Activated naive CD4-positive, alpha-beta T cell treated with anti-CD3 and anti-CD28 coated beads for 36 hours (primary cell): ENCODE measurements at regions of chr14 and their contacts with region 1.

Region 1: GRCh38 chr14:54566410-54567223 is at the start of gene SAMD4A:
- DNase-seq: peak; percentile 75
- H3K4me3 Mint-ChIP-seq: peak within 1 kb of the TSS; percentile 94
- H3K27ac Mint-ChIP-seq: peak within 1 kb of the TSS; percentile 79
- H3K4me1 Mint-ChIP-seq: peaks cover 26% of the 10 kb centered on the region
- H3K27me3 Mint-ChIP-seq: no peaks in the 10 kb centered on the region
- total RNA-seq, gene SAMD4A: 4.7 to 4.9 TPM

Region 2: GRCh38 chr14:54058505-54058904 is 508.1 kb before region 1 on chr14:
- CTCF ChIA-PET with region 1: no interaction called
- intact Hi-C with region 1: no loop called
- DNase-seq: no peak
- H3K4me3 Mint-ChIP-seq: no peak overlapping the region
- H3K27ac Mint-ChIP-seq: no peak overlapping the region
- H3K4me1 Mint-ChIP-seq: no peaks in the 10 kb centered on the region
- H3K27me3 Mint-ChIP-seq: no peaks in the 10 kb centered on the region

Region 3: GRCh38 chr14:54440873-54441868 is 125.4 kb before region 1 on chr14 and contains the start of gene CNIH1:
- CTCF ChIA-PET with region 1: no interaction called
- intact Hi-C with region 1: loop called (anchors 1 kb)
- DNase-seq: peak; percentile 93
- H3K4me3 Mint-ChIP-seq: peak within 1 kb of the TSS; percentile 87
- H3K27ac Mint-ChIP-seq: peak within 1 kb of the TSS; percentile 97
- H3K4me1 Mint-ChIP-seq: peaks cover 48% of the 10 kb centered on the region
- H3K27me3 Mint-ChIP-seq: no peaks in the 10 kb centered on the region
- total RNA-seq, gene CNIH1: 68.1 to 78.4 TPM

Region 4: DNA sequence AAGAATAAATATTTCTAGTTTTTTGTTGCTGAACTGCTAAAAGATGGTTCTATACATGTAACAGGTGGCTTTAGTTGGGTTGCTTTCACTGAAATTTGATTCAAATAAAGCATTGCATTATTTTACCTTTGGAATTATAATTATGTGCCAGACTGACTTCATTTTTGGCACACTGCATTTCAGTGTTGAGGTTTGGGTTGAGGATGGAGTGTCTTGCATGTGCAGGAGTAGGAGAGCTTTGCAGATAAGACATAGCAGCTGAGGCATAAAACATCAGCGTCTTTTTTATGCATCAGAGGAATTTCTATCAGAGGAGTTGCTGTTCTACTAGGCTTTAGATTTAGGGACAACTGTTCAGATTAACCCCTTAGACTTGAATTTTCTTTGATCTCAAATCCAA is 17.5 kb after region 1 on chr14:
- CTCF ChIA-PET with region 1: no interaction called
- intact Hi-C with region 1: no loop called
- DNase-seq: no peak
- H3K4me3 Mint-ChIP-seq: no peak overlapping the region
- H3K27ac Mint-ChIP-seq: no peak overlapping the region
- H3K4me1 Mint-ChIP-seq: no peaks in the 10 kb centered on the region
- H3K27me3 Mint-ChIP-seq: no peaks in the 10 kb centered on the region

Region 5: DNA sequence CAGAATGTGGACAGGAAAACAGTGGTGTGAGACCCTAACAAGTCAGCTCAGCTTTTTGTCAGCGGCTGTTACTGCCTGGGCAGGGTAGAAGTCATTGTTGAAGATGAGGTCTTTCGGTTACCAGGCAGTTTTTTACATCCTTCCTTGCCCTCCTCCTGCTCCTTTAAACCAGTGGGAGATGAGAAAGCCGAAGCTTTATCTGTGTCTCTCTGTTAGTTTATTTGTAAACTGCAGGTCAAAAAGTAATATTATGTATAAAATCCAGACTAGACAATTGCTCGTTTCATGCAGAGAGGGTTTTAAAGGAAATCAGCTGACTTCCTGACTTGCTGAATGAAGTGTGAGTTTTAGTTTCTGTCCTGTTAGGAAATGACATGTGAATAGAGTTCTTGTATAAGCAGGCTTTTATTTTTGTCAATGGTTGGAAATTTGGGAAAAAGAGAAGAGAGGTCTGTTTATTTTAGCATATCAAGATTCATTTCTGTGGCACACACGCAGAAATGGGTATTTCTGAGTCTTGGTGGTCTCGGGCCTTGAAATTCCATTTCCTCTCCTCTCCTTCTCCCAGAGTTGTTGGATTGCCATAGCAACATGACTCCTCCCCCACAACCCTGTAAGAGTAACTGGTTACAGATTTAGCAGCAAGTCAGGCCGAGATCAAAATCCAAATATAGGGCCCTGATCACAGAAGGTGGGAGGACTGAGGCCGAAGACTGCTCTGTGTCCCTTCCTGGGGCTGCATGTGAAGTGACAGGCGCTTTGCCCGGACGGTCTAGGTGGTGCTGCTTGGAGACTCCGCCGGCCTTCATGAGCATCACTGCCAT is 61.1 kb after region 1 on chr14:
- CTCF ChIA-PET with region 1: interaction called, 8 read pairs
- intact Hi-C with region 1: loop called (anchors 1 kb)
- DNase-seq: peak; percentile 62
- H3K4me3 Mint-ChIP-seq: peak overlapping the region; percentile 61
- H3K27ac Mint-ChIP-seq: peak overlapping the region; percentile 86
- H3K4me1 Mint-ChIP-seq: peaks cover 57% of the 10 kb centered on the region
- H3K27me3 Mint-ChIP-seq: no peaks in the 10 kb centered on the region

Region 6: DNA sequence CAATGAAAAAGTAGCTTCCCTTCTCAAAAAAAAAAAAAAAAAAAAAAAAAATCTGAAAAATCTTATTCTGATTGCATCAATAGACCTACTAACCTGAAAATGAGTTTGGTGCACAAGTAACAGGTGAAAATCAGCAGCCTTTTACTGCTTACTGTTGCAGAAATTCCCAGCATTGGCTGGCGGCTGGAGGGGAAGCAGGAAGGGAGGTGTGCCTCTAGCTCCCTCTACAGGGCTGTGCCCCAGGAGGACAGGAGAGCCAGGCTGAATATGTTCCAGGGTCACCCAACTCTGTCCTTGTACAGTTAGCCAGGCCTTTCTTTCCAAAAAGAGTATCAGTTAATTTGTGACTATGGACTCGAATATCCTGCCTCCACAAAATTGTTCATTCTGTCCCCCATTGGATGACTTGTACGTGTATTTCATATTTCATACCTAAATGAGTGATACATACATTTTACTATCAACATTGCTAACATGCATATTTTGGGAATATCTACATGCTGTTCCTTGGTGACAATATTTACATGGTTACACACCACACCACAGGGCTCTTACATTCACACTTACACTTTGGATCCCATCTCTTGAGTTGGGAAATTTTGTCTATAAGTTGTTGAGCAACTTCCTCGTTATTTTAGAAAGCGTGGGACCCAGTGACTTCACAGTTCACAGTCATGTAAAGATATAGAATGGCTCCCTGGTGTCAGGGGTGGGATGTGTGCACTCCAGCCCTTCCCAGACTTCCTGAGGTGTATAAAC is 125.1 kb after region 1 on chr14:
- CTCF ChIA-PET with region 1: interaction called, 17 read pairs
- intact Hi-C with region 1: loop called (anchors 1 kb)
- DNase-seq: peak; percentile 80
- H3K4me3 Mint-ChIP-seq: no peak overlapping the region
- H3K27ac Mint-ChIP-seq: no peak overlapping the region
- H3K4me1 Mint-ChIP-seq: peaks cover 15% of the 10 kb centered on the region
- H3K27me3 Mint-ChIP-seq: no peaks in the 10 kb centered on the region

Region 7: GRCh38 chr14:54805521-54806322 is 239.1 kb after region 1 on chr14:
- CTCF ChIA-PET with region 1: interaction called, 39 read pairs
- intact Hi-C with region 1: loop called (anchors 1 kb)
- DNase-seq: peak; percentile 90
- H3K4me3 Mint-ChIP-seq: peak overlapping the region; percentile 6
- H3K27ac Mint-ChIP-seq: no peak overlapping the region
- H3K4me1 Mint-ChIP-seq: peaks cover 6% of the 10 kb centered on the region
- H3K27me3 Mint-ChIP-seq: peaks cover 11% of the 10 kb centered on the region

Region 8: GRCh38 chr14:55026793-55027561 is 460.4 kb after region 1 on chr14 and contains the starts of genes SOCS4 and WDHD1:
- CTCF ChIA-PET with region 1: no interaction called
- intact Hi-C with region 1: loop called (anchors 1 kb)
- DNase-seq: peak; percentile 97
- H3K4me3 Mint-ChIP-seq: peak within 1 kb of the TSS; percentile 96
- H3K27ac Mint-ChIP-seq: peak within 1 kb of the TSS; percentile 92
- H3K4me1 Mint-ChIP-seq: peaks cover 46% of the 10 kb centered on the region
- H3K27me3 Mint-ChIP-seq: no peaks in the 10 kb centered on the region
- total RNA-seq, gene SOCS4: 17.7 to 17.9 TPM
- total RNA-seq, gene WDHD1: 61.1 to 62.9 TPM